Psoas muscle (tissue), 8 donors: ENCODE measurements at regions of chr20 and their contacts with region 1.

Region 1: GRCh38 chr20:57398231-57398821 is 7.1 kb downstream of the RBM38 start:
- DNase-seq: peak; percentile 81 to 91
- ATAC-seq: peak; percentile 41 to 58 (median 53)
- H3K4me3 ChIP-seq: peak overlapping the region; percentile 77
- H3K27ac ChIP-seq: peak overlapping the region; percentile 92
- H3K4me1 ChIP-seq: peaks cover 81% of the 10 kb centered on the region
- H3K27me3 ChIP-seq: no peaks in the 10 kb centered on the region
- CTCF ChIP-seq: no peak

Region 2: DNA sequence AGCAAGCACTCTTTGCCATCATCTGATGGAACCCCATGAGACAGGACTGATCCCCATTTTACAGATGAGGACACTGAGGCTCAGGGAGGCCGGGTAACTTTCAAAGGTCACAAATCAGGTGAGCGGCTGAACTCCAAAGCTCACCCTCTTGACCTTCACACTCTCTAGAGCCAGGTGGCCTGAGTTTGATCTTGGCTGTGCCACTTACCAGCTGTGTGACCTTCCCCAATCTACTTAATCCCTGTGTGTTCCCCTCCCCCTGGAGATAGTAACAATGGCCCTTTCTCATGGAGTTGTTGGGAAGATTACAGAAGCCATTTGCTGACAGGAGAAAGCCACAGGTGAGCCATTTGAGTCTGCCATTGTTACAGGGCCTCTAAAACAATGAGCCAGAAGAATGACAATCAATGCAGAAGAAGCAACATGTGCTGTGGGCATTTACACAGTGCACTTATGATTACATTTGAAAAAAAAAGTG is 166.3 kb before region 1 on chr20:
- intact Hi-C with region 1: no loop called
- DNase-seq: no peak
- ATAC-seq: no peak
- H3K4me3 ChIP-seq: no peak overlapping the region
- H3K27ac ChIP-seq: no peak overlapping the region
- H3K4me1 ChIP-seq: no peaks in the 10 kb centered on the region
- H3K27me3 ChIP-seq: peaks cover 0 to 8% (median 3%) of the 10 kb centered on the region in 3 donors
- CTCF ChIP-seq: no peak

Region 3: DNA sequence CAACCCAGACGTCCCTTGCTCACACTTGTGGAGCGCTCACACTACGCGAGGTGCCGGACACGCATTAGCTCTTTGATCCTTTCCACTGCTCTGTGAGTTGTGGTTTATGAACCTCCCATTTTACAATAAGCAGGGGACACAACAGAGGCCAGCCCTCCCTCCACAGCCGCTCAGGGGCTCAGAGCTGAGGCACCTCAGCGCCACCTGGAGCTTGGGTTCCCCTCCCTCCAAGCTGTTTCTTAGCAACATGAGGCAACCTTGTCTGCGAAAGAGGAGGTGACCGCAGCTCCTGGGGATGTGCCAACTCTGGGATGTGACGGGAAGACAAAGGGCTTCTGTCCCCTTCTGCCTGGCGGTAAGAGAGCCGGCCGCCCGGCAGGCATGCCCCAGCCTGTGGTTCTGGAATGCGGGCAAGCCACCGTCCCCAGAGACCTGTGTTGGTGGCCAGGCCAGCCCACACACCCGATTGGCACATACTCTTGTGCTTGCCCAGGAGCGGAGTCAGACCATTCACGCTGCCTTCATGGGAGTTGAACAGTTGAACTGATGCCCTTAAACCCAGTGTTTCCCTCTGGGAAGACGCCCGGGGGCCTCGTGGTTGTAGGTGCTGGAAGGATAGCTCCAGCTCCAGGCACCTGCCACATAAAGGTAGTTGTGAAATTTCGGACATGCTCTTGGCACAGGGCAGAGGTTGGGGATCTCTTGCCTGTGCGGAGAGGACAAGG is 37.3 kb after region 1 on chr20:
- intact Hi-C with region 1: loop called (anchors 2 to 5 kb)
- DNase-seq: peak; percentile 85 to 90
- ATAC-seq: peak; percentile 40 to 80 (median 70)
- H3K4me3 ChIP-seq: peak overlapping the region; percentile 9
- H3K27ac ChIP-seq: peak overlapping the region; percentile 85
- H3K4me1 ChIP-seq: peaks cover 61% of the 10 kb centered on the region
- H3K27me3 ChIP-seq: no peaks in the 10 kb centered on the region
- CTCF ChIP-seq: no peak

Region 4: DNA sequence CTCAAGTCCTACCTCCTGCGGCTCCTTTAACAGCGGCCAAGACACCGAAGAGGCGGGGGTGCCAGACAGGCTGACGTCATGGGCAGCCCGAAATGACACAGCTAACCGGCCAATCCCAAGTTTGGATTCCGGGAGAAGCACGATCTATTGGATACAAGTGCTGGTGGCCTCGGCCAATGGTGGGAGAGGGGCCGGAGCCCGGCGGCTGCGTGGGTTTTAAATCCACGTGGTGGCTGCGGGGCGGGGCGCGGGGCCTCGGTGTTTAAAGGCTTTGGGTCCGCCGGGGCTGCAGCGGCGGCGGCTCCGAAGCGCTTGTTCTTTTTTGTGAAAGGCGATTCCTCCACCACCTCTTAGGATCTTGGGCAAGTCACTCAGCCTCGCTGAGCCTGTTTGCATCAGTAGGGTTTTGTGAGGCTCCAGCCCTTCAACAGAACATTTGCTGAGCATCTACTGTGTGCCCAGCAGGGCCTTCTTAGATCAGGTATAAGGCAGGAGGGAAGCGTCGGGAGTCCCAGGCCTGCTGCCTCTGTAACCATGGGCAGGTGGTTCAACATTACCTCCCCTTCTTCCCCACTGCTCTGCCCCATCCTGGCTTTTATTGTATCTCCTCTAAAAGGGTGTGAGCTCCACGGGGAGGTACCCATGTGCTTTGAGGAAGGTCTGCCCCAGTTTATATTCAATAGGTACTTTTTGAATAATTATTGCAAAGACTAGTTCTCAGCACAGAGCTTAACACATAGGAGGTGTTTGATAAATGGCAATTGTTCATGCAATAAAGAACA is 320.4 kb after region 1 on chr20:
- intact Hi-C with region 1: no loop called
- DNase-seq: peak; percentile 95 to 97
- ATAC-seq: peak; percentile 88 to 95 (median 90)
- H3K4me3 ChIP-seq: peak overlapping the region; percentile 48
- H3K27ac ChIP-seq: peak overlapping the region; percentile 34
- H3K4me1 ChIP-seq: peaks cover 49% of the 10 kb centered on the region
- H3K27me3 ChIP-seq: no peaks in the 10 kb centered on the region
- CTCF ChIP-seq: no peak

Region 5: DNA sequence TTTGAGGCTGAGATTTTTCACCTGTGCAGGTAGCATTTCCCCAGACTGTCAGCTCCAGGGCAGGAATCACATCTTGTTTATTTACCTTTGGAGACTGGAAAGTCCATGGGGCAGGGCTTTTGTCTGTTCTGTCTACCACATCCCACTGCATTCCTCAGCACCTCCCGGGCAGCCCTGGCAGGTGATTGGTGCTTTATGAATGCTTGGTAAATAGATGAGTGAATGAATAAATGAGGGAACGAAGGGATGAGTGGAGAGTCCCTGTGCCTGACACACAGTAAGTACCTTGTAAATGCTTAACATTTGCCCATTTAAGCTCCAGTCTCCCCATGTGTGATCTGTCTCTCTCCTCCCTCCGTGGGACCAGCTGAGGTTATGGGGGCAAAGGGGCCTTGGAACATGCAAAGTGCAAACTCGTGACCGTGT is 381.1 kb after region 1 on chr20:
- intact Hi-C with region 1: no loop called
- DNase-seq: no peak
- ATAC-seq: no peak
- H3K4me3 ChIP-seq: no peak overlapping the region
- H3K27ac ChIP-seq: no peak overlapping the region
- H3K4me1 ChIP-seq: no peaks in the 10 kb centered on the region
- H3K27me3 ChIP-seq: no peaks in the 10 kb centered on the region
- CTCF ChIP-seq: no peak